ENCODE measurements at regions of chr17 and their contacts with region 1.

Region 1: DNA sequence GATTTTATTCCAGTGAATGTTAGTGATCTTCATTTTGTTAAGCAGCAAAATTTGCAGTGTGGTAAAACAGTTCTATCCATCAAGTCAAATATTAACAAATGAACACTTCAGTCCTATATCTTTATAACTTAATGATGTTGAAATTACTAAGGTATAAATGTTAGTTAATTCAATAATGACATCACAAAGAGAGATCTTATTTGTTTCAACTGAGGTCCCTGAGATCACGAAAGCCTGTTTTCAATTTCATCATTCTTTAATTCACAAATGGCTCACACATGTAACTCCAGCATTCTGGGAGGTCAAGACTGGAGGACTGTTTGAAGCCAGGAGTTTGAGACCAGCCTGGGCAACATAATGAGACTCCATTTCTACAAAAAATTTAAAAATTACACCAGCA is 13.9 kb downstream of the SMURF2 start:
- DNase-seq: no peak
- ATAC-seq: no peak
- H3K4me3 ChIP-seq: no peak overlapping the region
- H3K27ac ChIP-seq: peak overlapping the region in 1 of 2 experiments; percentile 26; a peak in 1 of 6 replicates
- H3K4me1 ChIP-seq: peaks cover 33% of the 10 kb centered on the region
- CTCF ChIP-seq: no peak
- EP300 ChIP-seq: no peak
- POLR2A ChIP-seq: no peak
- RAD21 ChIP-seq: no peak

Region 2: DNA sequence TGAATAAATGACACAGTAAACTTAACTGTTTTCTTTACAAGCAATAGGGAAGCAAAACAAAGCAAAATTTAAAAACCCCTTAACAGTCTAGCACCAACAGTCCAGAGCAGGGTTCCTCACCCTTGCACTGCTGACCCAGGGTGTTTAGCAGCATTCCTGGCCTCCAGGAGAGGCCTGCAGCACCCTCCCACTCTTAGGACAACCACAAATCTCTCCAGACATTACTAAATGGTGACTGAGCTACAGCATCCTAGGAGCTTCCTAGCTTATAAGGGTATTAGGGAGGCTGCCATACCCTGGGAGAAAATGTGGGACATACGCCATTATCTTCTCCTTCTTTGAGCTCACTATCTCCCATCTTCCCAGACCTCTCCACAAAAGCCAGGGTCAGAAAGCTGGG is 167.3 kb before region 1 on chr17:
- CTCF ChIA-PET with region 1: no interaction called
- POLR2A ChIA-PET with region 1: no interaction called
- DNase-seq: no peak
- ATAC-seq: no peak
- H3K4me3 ChIP-seq: no peak overlapping the region
- H3K27ac ChIP-seq: no peak overlapping the region
- H3K4me1 ChIP-seq: peaks cover 4% of the 10 kb centered on the region; the same call in 1 of the 3 replicates
- CTCF ChIP-seq: no peak
- EP300 ChIP-seq: no peak
- POLR2A ChIP-seq: no peak
- RAD21 ChIP-seq: no peak

Region 3: DNA sequence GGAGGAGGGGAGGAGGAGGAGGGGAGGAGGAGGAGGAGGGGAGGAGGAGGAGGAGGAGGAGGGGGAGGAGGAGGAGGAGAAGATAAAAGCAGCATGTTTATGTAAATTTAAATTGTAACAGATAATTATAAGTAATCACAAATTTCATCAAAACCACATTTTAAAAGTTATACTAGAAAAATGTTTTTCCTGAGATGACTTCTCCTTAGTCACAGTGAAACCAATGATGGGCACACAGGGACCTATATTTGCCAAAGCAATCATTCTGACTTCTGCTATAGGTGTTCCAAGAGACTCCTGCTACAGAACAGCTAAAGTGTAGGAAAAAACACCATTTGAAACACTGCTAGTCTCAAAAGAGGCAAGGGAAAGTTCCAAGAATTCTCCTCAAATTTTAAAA is 75.0 kb before region 1 on chr17:
- CTCF ChIA-PET with region 1: interaction called, 21 read pairs
- POLR2A ChIA-PET with region 1: no interaction called
- DNase-seq: no peak
- ATAC-seq: peak in 1 of 2 experiments; percentile 30; a peak in 2 of 6 replicates
- H3K4me3 ChIP-seq: no peak overlapping the region
- H3K27ac ChIP-seq: no peak overlapping the region
- H3K4me1 ChIP-seq: 0 out of 3 replicates have a peak, but pooled peaks cover 4% of the 10 kb centered on the region
- CTCF ChIP-seq: no peak
- EP300 ChIP-seq: no peak
- POLR2A ChIP-seq: no peak
- RAD21 ChIP-seq: no peak

Region 4: GRCh38 chr17:64635647-64636307 is 12.5 kb before region 1 on chr17:
- CTCF ChIA-PET with region 1: interaction called, 42 read pairs
- POLR2A ChIA-PET with region 1: no interaction called
- DNase-seq: peak in 1 of 2 experiments; percentile 18
- ATAC-seq: no peak
- H3K4me3 ChIP-seq: no peak overlapping the region
- H3K27ac ChIP-seq: peak overlapping the region; percentile 23 to 60; a peak in 5 of 6 replicates
- H3K4me1 ChIP-seq: peaks cover 25% of the 10 kb centered on the region
- CTCF ChIP-seq: no peak
- EP300 ChIP-seq: no peak
- POLR2A ChIP-seq: no peak
- RAD21 ChIP-seq: no peak

Region 5: GRCh38 chr17:64661976-64662773 is 13.9 kb after region 1 on chr17 and contains the start of gene SMURF2:
- CTCF ChIA-PET with region 1: interaction called, 12 read pairs
- POLR2A ChIA-PET with region 1: interaction called, 5 read pairs
- DNase-seq: peak; percentile 78 to 89
- ATAC-seq: peak; percentile 80 to 84
- H3K4me3 ChIP-seq: peak within 1 kb of the TSS; percentile 92
- H3K27ac ChIP-seq: peak within 1 kb of the TSS; percentile 92 to 94
- H3K4me1 ChIP-seq: peaks cover 54% of the 10 kb centered on the region
- CTCF ChIP-seq: no peak
- EP300 ChIP-seq: no peak; a peak in 1 of 5 replicates
- POLR2A ChIP-seq: peak; percentile 87
- RAD21 ChIP-seq: peak; percentile 14 to 27; a peak in 2 of 5 replicates
- polyA plus RNA-seq, gene SMURF2: 26.3 and 29.1 TPM in 2 replicates

Region 6: DNA sequence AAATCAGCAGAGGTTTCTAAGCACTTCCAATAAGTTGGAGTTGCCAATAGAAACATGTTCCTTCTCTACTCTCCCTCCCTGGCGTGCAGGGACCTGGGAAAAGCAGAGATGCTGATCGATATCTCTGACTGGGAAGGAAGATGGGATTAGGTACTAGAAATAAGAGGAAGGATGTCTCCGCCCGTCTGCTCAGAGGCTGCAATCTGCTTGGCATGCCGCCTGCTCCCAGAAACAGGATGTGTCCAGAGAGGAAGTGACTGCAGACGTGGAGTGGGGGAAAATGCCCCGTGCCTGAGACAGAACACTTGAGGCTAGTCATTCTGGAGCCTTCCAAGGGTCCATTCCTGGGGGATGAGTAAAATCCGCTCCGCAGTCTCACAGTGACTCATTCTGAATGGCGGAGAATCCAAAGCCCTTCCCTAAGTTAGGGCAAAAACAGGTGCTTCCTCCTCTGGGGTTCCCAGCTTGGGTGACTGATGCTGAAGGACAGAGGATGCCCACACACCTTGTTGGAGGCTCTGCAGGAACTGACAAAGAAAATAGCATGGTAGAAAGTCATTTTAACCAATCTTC is 58.9 kb after region 1 on chr17:
- CTCF ChIA-PET with region 1: interaction called, 10 read pairs
- POLR2A ChIA-PET with region 1: no interaction called
- DNase-seq: peak; percentile 97 to 98
- ATAC-seq: peak; percentile 94 to 96
- H3K4me3 ChIP-seq: no peak overlapping the region
- H3K27ac ChIP-seq: peak overlapping the region; percentile 79 to 86
- H3K4me1 ChIP-seq: peaks cover 49% of the 10 kb centered on the region
- CTCF ChIP-seq: no peak
- EP300 ChIP-seq: peak; percentile 81 to 82; a peak in 3 of 5 replicates
- POLR2A ChIP-seq: no peak
- RAD21 ChIP-seq: peak; percentile 36 to 52; a peak in 4 of 5 replicates

Region 7: DNA sequence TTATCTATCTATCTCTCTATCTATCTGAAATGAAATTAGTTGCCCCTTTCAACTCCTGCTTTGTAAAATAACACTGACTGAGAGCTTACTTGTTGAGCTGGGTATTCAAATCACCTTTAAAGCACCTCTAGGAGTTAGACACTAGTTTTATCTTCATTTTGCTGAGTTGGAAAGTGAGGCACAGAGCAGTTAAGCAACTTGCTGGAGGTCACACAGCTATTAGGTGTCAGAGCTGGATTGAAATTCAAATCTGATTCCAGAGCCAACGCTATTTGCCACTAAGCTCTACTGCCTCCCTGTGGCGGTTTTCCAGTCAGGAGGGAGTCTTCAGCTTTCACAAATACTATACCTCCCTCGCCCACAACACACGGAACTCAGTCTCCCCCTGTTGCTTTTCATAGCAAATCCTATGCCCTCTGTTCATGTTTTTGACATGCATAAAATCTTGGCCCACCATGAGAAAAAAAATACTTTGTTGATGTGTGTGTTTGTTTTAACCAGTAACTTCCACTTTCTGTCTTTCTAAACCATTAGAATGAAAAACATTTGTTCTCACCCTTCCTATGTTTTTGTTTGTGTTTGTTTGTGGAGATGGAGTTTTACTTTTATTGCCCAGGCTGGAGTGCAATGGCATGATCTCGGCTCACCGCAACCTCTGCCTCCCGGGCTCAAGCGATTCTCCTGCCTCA is 88.7 kb after region 1 on chr17:
- CTCF ChIA-PET with region 1: interaction called, 30 read pairs
- POLR2A ChIA-PET with region 1: no interaction called
- DNase-seq: peak in 1 of 2 experiments; percentile 83
- ATAC-seq: peak; percentile 78 to 80
- H3K4me3 ChIP-seq: no peak overlapping the region
- H3K27ac ChIP-seq: no peak overlapping the region
- H3K4me1 ChIP-seq: peaks cover 28% of the 10 kb centered on the region
- CTCF ChIP-seq: peak; percentile 96
- EP300 ChIP-seq: no peak
- POLR2A ChIP-seq: no peak
- RAD21 ChIP-seq: peak; percentile 92 to 96

Region 8: DNA sequence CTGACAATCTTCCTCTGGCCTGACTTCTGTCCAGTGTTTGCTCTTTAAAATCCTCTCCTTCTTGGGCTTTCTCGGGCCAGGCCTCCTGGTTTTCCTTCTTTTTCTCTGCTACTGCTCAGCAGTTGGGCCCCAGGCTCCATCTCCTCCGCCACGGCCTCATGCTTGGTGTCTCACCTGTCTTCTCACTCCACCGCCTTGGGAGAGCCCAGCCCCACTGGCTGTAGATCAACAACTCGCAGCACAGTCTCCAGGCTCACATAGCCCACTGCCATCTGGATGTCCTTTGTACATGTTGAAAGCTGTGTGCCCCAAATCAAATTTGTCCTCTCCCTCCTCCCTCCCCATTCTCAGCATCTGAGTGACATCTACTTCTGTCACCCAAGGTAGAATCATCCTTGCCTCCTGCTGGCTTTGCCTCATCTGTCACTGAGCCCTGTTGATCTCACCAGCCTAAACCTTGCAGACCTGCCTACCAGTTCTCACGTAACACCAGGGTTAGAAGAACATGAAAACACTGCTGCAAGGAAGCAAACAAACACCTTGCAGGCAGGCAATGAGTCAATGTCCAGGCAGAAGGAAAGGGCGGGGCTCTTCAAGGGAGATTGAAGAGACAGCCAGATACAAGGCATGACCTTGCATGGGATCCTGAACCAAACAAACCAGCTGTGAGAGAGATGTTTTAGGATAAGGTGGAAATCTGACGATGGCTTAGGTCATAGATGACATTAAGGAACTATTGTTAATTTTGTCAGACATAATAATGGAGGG is 117.1 kb after region 1 on chr17:
- CTCF ChIA-PET with region 1: no interaction called
- POLR2A ChIA-PET with region 1: no interaction called
- DNase-seq: peak in 1 of 2 experiments; percentile 48
- ATAC-seq: peak; percentile 42 to 68; a peak in 4 of 6 replicates
- H3K4me3 ChIP-seq: no peak overlapping the region
- H3K27ac ChIP-seq: no peak overlapping the region
- H3K4me1 ChIP-seq: peaks cover 12% of the 10 kb centered on the region
- CTCF ChIP-seq: no peak
- EP300 ChIP-seq: no peak
- POLR2A ChIP-seq: no peak
- RAD21 ChIP-seq: no peak

Measured in A549 (cell line).